B cell (primary cell): ENCODE measurements at regions of chr18 and their contacts with region 1.

Region 1: GRCh38 chr18:63311118-63312018 is 8.2 kb downstream of the BCL2 start:
- DNase-seq: peak; percentile 84
- ATAC-seq: peak; percentile 74
- H3K4me3 ChIP-seq: peak overlapping the region in 4 of 5 experiments; percentile 4 to 98 (median 30)
- H3K4me3 Mint-ChIP-seq: peak overlapping the region; percentile 81
- H3K27ac ChIP-seq: peak overlapping the region; percentile 68 to 92
- H3K27ac Mint-ChIP-seq: peak overlapping the region; percentile 92
- H3K4me1 ChIP-seq: peaks cover 77 to 85% of the 10 kb centered on the region in 2 donors
- H3K4me1 Mint-ChIP-seq: peaks cover 92% of the 10 kb centered on the region
- H3K27me3 ChIP-seq: no peaks in the 10 kb centered on the region
- H3K27me3 Mint-ChIP-seq: no peaks in the 10 kb centered on the region
- CTCF ChIP-seq: no peak

Region 2: GRCh38 chr18:61851940-61852451 is 1459.4 kb before region 1 on chr18:
- CTCF ChIA-PET with region 1: no interaction called
- POLR2A ChIA-PET with region 1: no interaction called
- intact Hi-C with region 1: no loop called
- DNase-seq: no peak
- ATAC-seq: no peak
- H3K4me3 ChIP-seq: no peak overlapping the region
- H3K4me3 Mint-ChIP-seq: no peak overlapping the region
- H3K27ac ChIP-seq: no peak overlapping the region
- H3K27ac Mint-ChIP-seq: no peak overlapping the region
- H3K4me1 ChIP-seq: no peaks in the 10 kb centered on the region
- H3K4me1 Mint-ChIP-seq: no peaks in the 10 kb centered on the region
- H3K27me3 ChIP-seq: no peaks in the 10 kb centered on the region
- H3K27me3 Mint-ChIP-seq: peaks cover 5% of the 10 kb centered on the region
- CTCF ChIP-seq: no peak

Region 3: DNA sequence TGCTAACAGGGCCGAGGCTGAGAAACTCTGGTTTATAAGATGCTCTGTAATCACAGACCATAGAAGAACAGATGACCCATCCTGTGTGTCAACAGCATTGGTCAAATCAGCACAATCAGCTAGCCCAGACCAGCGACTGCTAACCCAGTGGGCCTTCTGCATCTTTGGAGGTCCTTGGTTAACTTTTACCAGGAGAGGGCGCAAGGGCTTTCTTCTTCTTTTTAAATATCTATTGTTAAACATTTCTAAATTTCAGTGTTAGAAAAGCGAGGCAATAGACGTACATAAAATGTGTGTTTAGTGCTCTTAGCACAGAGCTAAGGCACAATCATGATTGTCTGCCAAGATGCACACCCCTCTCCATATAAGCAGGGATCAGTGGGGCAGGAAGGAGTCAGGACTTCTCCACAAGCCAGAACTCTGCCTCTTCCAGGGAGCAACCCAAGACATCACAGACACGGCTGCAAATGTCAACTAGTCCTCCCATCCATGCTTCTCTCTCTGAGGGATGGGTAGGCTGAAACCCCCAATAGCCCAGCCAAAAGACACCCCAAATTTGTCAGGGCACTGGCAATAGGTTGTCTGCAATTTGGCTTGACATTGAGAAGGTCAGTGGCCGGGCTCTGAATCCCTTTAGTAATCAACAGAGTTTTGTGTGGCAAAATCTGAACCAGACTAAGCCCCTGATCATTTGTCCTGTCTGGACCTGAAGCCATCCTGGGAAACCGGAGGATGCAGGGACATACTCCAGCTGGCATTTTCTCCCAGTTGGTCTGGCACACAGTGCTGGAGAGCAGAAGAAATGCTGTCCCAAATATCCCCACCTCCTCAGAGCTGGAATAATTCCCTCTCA is 180.0 kb before region 1 on chr18:
- CTCF ChIA-PET with region 1: interaction called, 17 read pairs
- POLR2A ChIA-PET with region 1: interaction called, 4 read pairs
- intact Hi-C with region 1: no loop called
- DNase-seq: peak; percentile 79
- ATAC-seq: peak; percentile 69
- H3K4me3 ChIP-seq: no peak overlapping the region
- H3K4me3 Mint-ChIP-seq: no peak overlapping the region
- H3K27ac ChIP-seq: peak overlapping the region in 1 of 2 donors; percentile 22
- H3K27ac Mint-ChIP-seq: peak overlapping the region; percentile 86
- H3K4me1 ChIP-seq: peaks cover 4 to 8% of the 10 kb centered on the region in 2 donors
- H3K4me1 Mint-ChIP-seq: peaks cover 30% of the 10 kb centered on the region
- H3K27me3 ChIP-seq: no peaks in the 10 kb centered on the region
- H3K27me3 Mint-ChIP-seq: no peaks in the 10 kb centered on the region
- CTCF ChIP-seq: peak; percentile 80

Region 4: GRCh38 chr18:63363951-63364350 is 52.6 kb after region 1 on chr18:
- CTCF ChIA-PET with region 1: no interaction called
- POLR2A ChIA-PET with region 1: no interaction called
- intact Hi-C with region 1: no loop called
- DNase-seq: no peak
- ATAC-seq: no peak
- H3K4me3 ChIP-seq: no peak overlapping the region
- H3K4me3 Mint-ChIP-seq: no peak overlapping the region
- H3K27ac ChIP-seq: no peak overlapping the region
- H3K27ac Mint-ChIP-seq: no peak overlapping the region
- H3K4me1 ChIP-seq: peaks cover 11 to 13% of the 10 kb centered on the region in 2 donors
- H3K4me1 Mint-ChIP-seq: peaks cover 25% of the 10 kb centered on the region
- H3K27me3 ChIP-seq: no peaks in the 10 kb centered on the region
- H3K27me3 Mint-ChIP-seq: no peaks in the 10 kb centered on the region
- CTCF ChIP-seq: no peak